ENCODE measurements at regions of chr15 and their contacts with region 1.

Region 1: GRCh38 chr15:34367101-34368081 is at the start of gene LPCAT4:
- DNase-seq: peak; percentile 79 to 97
- H3K4me3 ChIP-seq: peak within 1 kb of the TSS; percentile 90
- CTCF ChIP-seq: peak in 1 of 3 donors; percentile 93
- POLR2A ChIP-seq: no peak
- total RNA-seq, gene LPCAT4: 19.0 to 36.4 (median 27.0) TPM

Region 2: GRCh38 chr15:34049112-34049511 is 318.3 kb before region 1 on chr15:
- intact Hi-C with region 1: no loop called
- DNase-seq: no peak
- H3K4me3 ChIP-seq: no peak overlapping the region
- CTCF ChIP-seq: no peak
- POLR2A ChIP-seq: no peak

Region 3: DNA sequence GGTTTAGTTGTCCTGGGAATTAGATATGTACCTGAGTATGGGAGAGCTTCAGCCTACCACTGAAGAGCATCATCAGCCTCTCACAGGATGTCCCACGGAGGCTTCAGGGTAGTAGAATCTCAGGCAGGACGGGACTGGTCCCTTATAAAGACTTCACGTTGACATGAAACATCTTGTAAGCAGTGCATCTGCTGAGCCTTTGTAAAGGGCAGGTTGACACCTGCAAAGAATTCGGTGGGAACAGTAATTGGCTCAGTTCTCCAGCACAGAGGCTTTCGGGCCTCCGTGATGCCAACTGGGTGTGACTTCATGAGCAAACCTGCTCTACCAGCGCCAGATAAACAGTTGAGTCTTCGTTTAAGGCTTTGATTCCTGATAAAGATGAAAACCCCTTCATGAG is 301.4 kb before region 1 on chr15:
- intact Hi-C with region 1: loop called (anchors 10 kb)
- DNase-seq: peak in 1 of 2 donors; percentile 75
- H3K4me3 ChIP-seq: no peak overlapping the region
- CTCF ChIP-seq: no peak
- POLR2A ChIP-seq: no peak

Region 4: DNA sequence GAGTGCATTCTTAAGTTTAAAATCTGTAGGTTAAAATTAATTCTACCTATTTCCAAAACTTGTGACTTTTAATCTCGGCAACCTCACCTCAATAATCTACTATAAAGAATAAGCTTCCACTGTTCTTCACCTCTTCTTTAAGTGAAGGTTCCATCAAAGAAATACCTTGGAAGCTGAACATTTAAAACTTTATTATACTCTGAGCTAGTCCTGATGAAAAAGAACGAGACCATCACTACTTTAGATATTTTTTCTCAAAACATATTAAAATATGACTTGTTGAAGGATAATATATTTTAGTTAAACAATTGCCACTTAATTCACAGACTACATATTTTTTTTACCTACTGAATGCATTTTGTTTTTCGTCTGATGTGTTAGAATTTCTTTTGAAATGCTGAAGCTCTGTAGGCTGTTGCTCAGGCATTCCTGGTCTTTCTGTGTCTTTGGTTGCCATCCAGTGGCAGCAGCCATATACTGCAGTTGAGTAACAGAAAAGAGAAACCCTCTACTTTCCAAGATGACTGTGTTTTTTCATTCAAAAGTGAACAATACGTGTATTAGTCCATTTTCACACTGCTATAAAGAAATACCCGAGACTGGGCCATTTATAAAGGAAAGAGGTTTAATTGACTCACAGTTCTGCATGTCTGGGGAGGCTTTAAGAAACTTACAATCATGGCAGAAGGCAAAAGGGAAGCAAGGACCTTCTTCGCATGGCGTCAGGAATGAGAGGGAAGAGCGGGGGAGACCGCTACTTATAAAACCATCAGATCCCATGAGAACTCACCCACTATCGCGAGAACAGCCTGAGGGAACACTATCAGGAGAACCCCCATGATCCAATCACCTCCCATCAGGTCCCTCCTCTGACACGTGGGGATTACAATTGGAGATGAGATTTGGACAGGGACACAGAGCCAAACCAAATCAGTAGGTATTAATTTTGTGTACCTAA is 220.6 kb after region 1 on chr15:
- intact Hi-C with region 1: loop called (anchors 10 kb)
- DNase-seq: peak in 1 of 2 donors; percentile 63
- H3K4me3 ChIP-seq: no peak overlapping the region
- CTCF ChIP-seq: no peak
- POLR2A ChIP-seq: no peak

Region 5: DNA sequence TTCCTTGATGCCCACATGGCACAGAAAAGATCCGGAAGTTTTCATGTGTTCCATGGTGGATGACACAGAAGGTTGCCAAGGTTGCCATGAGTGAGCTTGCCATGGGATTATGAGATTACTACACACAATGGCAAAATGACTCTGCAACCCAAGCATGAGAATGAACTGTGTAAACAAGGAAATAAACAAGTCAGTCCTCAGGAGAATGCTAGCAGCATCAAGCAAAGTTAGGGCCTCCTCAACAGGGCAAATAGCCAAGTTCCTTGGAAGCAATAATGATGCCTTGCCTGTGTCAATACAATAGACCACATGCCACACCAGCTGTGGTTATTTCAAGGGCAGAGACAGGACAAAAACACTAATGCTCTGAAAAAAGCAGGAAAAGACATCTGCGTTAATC is 560.3 kb after region 1 on chr15:
- intact Hi-C with region 1: loop called (anchors 10 kb)
- DNase-seq: no peak
- H3K4me3 ChIP-seq: no peak overlapping the region
- CTCF ChIP-seq: no peak
- POLR2A ChIP-seq: no peak

Measured in lower leg skin (tissue), 4 donors.